A673 (cell line): ENCODE measurements at regions of chr12 and their contacts with region 1.

Region 1: DNA sequence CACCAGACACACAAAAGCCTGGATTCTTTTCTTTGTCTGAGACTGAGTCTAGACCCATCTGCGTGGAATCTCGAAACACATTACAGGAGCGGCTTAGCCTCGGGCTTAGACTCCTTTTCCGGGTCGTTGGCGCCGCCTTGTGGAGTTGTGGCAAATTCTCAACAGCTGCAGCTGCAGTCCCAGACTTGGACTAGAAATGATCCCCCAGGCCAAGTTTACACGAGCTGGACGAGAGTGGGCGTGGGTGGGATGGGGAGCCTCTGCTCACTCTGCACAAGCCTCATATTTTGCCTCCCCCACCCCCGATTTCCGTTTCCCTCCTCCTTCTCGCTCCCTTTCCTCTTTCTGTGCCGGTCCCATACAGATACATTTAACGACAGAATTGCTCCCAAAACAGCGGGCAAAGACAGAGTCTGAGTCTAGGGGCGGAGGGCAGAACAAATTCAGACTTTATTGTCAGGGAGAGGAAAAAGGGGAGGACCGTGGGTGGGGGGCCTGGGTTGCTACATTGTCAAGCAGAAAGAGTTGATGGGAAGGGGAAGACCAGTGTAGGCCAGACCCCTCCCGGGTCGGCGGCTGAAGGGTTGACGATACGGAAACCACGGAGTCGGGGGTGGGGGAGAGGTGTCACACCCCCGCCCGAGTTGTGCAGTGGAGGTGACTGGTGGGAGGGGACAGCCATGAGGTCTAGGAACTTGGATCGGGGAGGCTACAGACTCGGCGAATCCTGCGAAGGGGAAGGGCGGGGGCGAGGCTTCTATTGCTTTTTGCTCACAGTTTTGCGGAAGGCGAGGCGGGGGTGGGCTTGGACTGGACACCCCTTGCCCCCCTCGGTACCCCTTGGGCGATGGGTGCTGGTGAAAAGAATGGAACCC is 4.7 kb upstream of the GPR84 start:
- DNase-seq: peak; percentile 94
- H3K4me3 ChIP-seq: peak overlapping the region; percentile 50
- H3K27ac ChIP-seq: peak overlapping the region; percentile 36
- H3K4me1 ChIP-seq: peaks cover 43% of the 10 kb centered on the region
- H3K27me3 ChIP-seq: no peaks in the 10 kb centered on the region
- CTCF ChIP-seq: peak; percentile 96

Region 2: DNA sequence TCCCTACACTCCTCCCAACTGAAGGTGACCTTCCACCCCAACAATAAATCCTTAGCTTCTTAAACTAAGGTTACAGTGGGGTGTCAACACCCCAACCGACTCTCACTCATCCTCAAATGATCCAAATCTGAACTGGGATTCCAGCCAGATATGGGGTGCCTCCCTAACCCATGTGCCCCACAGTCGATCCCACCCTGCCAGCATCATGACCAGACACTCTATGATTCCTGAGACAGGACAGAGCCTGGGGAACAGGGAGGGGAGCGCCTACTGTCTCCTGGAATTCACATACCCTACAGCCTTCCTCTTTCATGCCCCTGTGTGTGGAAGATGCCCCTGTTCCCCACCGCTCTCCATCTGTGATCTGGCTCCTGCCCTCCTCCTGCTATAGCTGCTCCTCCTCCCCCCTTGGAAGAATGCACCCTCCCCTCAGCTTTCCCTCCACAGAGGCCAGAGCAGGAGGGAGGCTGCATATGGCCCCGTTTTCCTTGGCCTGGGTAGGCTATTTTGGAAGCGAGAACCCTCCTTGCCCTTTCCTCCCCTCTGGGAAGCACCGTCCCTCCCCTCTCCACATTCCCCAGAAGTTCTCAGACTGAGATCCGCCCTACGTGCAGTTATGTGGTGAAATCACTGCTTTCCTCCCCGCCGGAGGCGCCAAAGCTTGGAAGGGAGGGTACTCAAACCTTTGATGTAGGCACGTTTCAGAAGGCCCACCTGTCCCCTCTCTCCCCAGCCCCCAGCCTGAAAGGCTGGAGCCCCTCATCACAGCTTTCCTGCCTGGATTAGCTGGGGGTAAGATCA is 228.2 kb before region 1 on chr12:
- CTCF ChIA-PET with region 1: no interaction called
- POLR2A ChIA-PET with region 1: no interaction called
- intact Hi-C with region 1: no loop called
- DNase-seq: no peak
- H3K4me3 ChIP-seq: no peak overlapping the region
- H3K27ac ChIP-seq: no peak overlapping the region
- H3K4me1 ChIP-seq: peaks cover under 1% of the 10 kb centered on the region
- H3K27me3 ChIP-seq: no peaks in the 10 kb centered on the region
- CTCF ChIP-seq: no peak

Region 3: DNA sequence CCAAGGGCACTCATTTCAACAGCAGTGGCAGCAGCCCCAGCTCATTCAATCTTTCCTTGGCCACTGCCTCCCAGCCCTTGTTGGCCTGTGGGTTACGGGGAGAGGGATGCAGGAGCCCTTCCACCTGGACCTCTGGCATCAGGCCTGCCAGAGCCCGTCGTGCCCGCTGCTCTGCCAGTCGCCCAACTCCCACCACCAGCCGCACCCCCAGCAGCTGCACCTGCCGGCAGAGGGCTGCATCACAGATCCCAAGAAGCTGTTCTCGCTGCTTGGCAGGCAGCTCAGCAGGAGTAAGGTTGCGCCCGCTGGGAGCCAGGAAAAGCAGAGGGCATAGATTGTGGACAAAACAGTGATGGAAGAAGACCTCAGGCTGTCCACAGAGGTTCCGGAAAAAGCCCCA is 186.9 kb before region 1 on chr12:
- CTCF ChIA-PET with region 1: no interaction called
- POLR2A ChIA-PET with region 1: no interaction called
- intact Hi-C with region 1: no loop called
- DNase-seq: no peak
- H3K4me3 ChIP-seq: no peak overlapping the region
- H3K27ac ChIP-seq: no peak overlapping the region
- H3K4me1 ChIP-seq: no peaks in the 10 kb centered on the region
- H3K27me3 ChIP-seq: no peaks in the 10 kb centered on the region
- CTCF ChIP-seq: no peak

Region 4: GRCh38 chr12:54220092-54220557 is 148.8 kb before region 1 on chr12:
- CTCF ChIA-PET with region 1: interaction called, 8 read pairs
- POLR2A ChIA-PET with region 1: no interaction called
- intact Hi-C with region 1: loop called (anchors 1 kb)
- DNase-seq: peak; percentile 88
- H3K4me3 ChIP-seq: no peak overlapping the region
- H3K27ac ChIP-seq: no peak overlapping the region
- H3K4me1 ChIP-seq: peaks cover 19% of the 10 kb centered on the region
- H3K27me3 ChIP-seq: no peaks in the 10 kb centered on the region
- CTCF ChIP-seq: peak; percentile 80

Region 5: GRCh38 chr12:54251667-54252284 is 117.2 kb before region 1 on chr12:
- CTCF ChIA-PET with region 1: interaction called, 10 read pairs
- POLR2A ChIA-PET with region 1: no interaction called
- intact Hi-C with region 1: no loop called
- DNase-seq: peak; percentile 71
- H3K4me3 ChIP-seq: no peak overlapping the region
- H3K27ac ChIP-seq: no peak overlapping the region
- H3K4me1 ChIP-seq: peaks cover 11% of the 10 kb centered on the region
- H3K27me3 ChIP-seq: no peaks in the 10 kb centered on the region
- CTCF ChIP-seq: peak; percentile 75

Region 6: GRCh38 chr12:54294152-54294952 is 74.6 kb before region 1 on chr12:
- CTCF ChIA-PET with region 1: no interaction called
- POLR2A ChIA-PET with region 1: no interaction called
- intact Hi-C with region 1: loop called (anchors 2 kb)
- DNase-seq: no peak
- H3K4me3 ChIP-seq: no peak overlapping the region
- H3K27ac ChIP-seq: no peak overlapping the region
- H3K4me1 ChIP-seq: no peaks in the 10 kb centered on the region
- H3K27me3 ChIP-seq: peaks cover under 1% of the 10 kb centered on the region
- CTCF ChIP-seq: peak; percentile 85

Region 7: DNA sequence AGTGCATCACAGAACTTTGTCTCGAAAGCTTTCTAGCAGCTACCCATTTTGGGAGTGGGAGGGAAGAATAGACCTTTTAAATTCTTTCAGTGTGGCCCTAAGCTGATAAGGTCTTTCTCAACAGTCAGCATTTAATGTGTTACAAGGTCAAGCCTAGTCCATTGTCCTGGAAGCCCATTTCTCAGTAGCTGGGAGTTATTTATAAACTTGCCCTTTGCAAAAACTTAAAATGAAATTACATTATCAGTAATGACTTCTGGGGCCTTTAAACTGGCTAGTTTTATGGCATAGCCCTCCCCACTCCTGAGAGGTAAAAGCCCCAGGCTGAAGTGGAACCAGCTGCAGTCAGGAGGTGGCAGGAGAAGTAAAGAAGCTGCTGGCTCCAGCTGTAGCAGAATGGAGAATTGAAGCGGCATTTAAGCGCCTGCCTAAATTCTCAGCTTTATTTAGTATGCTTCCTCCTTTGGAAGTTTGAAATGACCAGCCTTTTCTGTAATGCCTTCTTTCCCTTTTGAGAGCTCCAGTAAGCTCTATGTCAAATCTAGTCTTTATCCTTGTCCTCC is 31.6 kb before region 1 on chr12:
- CTCF ChIA-PET with region 1: interaction called, 3 read pairs
- POLR2A ChIA-PET with region 1: no interaction called
- intact Hi-C with region 1: loop called (anchors 2 kb)
- DNase-seq: no peak
- H3K4me3 ChIP-seq: no peak overlapping the region
- H3K27ac ChIP-seq: no peak overlapping the region
- H3K4me1 ChIP-seq: peaks cover 11% of the 10 kb centered on the region
- H3K27me3 ChIP-seq: no peaks in the 10 kb centered on the region
- CTCF ChIP-seq: no peak

Region 8: DNA sequence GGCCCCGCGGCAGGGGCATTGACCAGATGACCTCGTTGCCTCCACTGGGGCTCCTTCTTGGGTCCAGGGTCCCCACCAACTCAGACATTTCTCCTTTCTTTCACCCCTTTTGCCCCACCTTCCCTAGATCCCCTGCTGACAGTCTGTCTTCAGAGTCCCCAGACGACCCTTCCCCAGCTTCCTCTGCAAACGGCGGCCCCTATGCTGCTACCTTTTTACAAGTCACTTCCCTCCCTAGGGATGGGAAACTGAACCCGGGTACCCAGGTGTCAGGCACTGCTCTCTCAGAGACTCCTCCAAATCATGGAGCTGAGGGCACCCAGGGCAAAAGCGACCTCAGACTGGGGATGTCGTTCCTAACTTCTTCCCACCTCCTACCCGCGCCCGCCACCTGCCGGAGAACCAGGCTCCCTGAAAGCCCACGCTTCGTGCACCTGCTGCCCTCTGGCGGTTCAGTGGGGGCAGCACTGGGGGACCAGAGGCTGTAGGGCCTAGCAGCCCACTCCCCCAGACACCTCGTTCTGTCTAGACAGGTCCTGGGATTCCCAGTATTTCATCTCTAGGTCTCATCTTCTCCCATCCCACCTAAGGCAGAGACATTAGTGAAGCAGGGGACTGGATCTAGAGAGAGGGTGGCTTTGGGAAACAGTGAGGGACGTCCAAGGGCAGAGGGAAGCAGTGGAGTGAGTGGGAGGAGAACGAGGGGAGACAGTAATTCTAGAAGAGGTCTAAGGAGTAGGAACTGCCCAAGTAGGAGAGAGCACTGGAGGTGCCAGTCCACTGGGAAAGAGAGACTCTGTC is 10.7 kb after region 1 on chr12:
- CTCF ChIA-PET with region 1: interaction called, 33 read pairs
- POLR2A ChIA-PET with region 1: interaction called, 3 read pairs
- intact Hi-C with region 1: loop called (anchors 1 kb)
- DNase-seq: peak; percentile 95
- H3K4me3 ChIP-seq: peak overlapping the region; percentile 39
- H3K27ac ChIP-seq: no peak overlapping the region
- H3K4me1 ChIP-seq: peaks cover 12% of the 10 kb centered on the region
- H3K27me3 ChIP-seq: no peaks in the 10 kb centered on the region
- CTCF ChIP-seq: peak; percentile 100

Region 9: GRCh38 chr12:54439521-54440255 is 70.7 kb after region 1 on chr12:
- CTCF ChIA-PET with region 1: interaction called, 10 read pairs
- POLR2A ChIA-PET with region 1: no interaction called
- intact Hi-C with region 1: no loop called
- DNase-seq: peak; percentile 79
- H3K4me3 ChIP-seq: no peak overlapping the region
- H3K27ac ChIP-seq: no peak overlapping the region
- H3K4me1 ChIP-seq: peaks cover 5% of the 10 kb centered on the region
- H3K27me3 ChIP-seq: no peaks in the 10 kb centered on the region
- CTCF ChIP-seq: peak; percentile 87